ENCODE measurements at regions of chr6 and their contacts with region 1.

Region 1: DNA sequence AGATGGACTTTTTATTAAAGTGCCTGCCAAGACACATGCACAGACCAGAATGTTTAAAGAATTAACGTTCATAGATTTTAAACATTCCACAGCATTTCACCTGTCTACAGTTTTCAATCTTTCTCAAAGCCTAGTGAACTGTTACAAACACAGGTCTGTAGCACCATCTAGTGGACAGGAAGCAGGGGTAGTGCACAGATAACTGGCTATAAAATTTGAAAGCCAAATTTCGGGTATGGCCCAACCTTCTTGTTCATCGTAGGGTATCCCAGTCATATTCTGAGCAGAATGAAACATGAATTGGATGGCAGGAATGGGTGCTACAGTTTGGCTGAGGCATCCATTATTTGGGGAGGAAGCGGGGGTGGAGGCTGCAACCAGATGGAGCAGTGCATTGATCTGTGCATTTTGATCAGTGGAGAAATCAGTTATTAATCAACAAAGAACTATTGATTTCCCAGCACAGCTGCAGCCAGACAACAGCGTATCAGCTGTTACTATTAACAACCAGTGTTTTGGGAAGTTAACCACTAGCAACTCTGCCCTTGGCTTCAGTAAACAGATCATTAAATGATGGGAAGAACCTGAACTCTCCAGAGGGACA is 56.1 kb upstream of the B3GAT2 start:
- DNase-seq: no peak
- ATAC-seq: no peak
- H3K4me3 ChIP-seq: no peak overlapping the region
- H3K27ac ChIP-seq: no peak overlapping the region
- H3K4me1 ChIP-seq: no peaks in the 10 kb centered on the region
- H3K27me3 ChIP-seq: no peaks in the 10 kb centered on the region
- CTCF ChIP-seq: peak; percentile 25 to 61 (median 44)
- POLR2A ChIP-seq: no peak

Region 2: GRCh38 chr6:70221025-70221714 is 791.8 kb before region 1 on chr6:
- in situ Hi-C with region 1: no loop called
- intact Hi-C with region 1: loop called (anchors 5 kb)
- DNase-seq: no peak
- ATAC-seq: no peak
- H3K4me3 ChIP-seq: no peak overlapping the region
- H3K27ac ChIP-seq: no peak overlapping the region
- H3K4me1 ChIP-seq: no peaks in the 10 kb centered on the region
- H3K27me3 ChIP-seq: no peaks in the 10 kb centered on the region
- CTCF ChIP-seq: peak in 4 of 5 experiments; percentile 16 to 75 (median 59)
- POLR2A ChIP-seq: no peak

Region 3: GRCh38 chr6:70310063-70310694 is 702.8 kb before region 1 on chr6:
- in situ Hi-C with region 1: loop called in 1 of 4 experiments (anchors 25 kb)
- intact Hi-C with region 1: no loop called
- DNase-seq: no peak
- ATAC-seq: no peak
- H3K4me3 ChIP-seq: no peak overlapping the region
- H3K27ac ChIP-seq: no peak overlapping the region
- H3K4me1 ChIP-seq: peaks cover 0 to 2% of the 10 kb centered on the region in 2 donors
- H3K27me3 ChIP-seq: no peaks in the 10 kb centered on the region
- CTCF ChIP-seq: peak in 3 of 5 experiments; percentile 24 to 53 (median 48)
- POLR2A ChIP-seq: no peak